CD8-positive, alpha-beta T cell (primary cell): ENCODE measurements at regions of chr17 and their contacts with region 1.

Region 1: GRCh38 chr17:40326014-40326831 is 17.2 kb downstream of the RARA start:
- DNase-seq: peak in 7 of 9 experiments; percentile 39 to 92 (median 71)
- ATAC-seq: peak; percentile 9
- H3K4me3 ChIP-seq: peak overlapping the region; percentile 36 to 51
- H3K4me3 Mint-ChIP-seq: peak overlapping the region; percentile 80
- H3K27ac ChIP-seq: peak overlapping the region; percentile 80 to 97
- H3K27ac Mint-ChIP-seq: peak overlapping the region; percentile 99
- H3K4me1 ChIP-seq: peaks cover 92% of the 10 kb centered on the region
- H3K4me1 Mint-ChIP-seq: peaks cover 90% of the 10 kb centered on the region
- H3K27me3 ChIP-seq: no peaks in the 10 kb centered on the region
- H3K27me3 Mint-ChIP-seq: no peaks in the 10 kb centered on the region
- CTCF ChIP-seq: no peak

Region 2: DNA sequence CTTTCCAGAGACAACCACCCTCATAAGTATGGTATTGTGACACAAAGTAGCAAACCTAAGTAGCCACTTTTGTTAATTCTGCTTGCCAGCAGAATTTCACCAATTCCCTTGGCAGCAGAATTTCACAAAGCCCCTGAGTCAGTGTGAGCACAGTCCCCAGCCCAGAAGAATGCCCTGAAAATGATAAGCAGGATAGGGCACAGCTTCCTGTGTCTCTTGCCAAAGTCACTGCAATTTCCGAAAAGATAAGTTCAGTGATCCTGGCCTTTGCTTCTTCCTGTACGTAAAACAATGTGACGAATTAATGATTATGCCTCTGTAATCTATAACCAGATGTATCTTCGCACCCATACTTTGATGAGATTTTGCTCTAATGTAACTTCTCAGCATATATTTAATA is 123.1 kb before region 1 on chr17:
- CTCF ChIA-PET with region 1: no interaction called
- POLR2A ChIA-PET with region 1: no interaction called
- intact Hi-C with region 1: no loop called
- DNase-seq: no peak
- ATAC-seq: no peak
- H3K4me3 ChIP-seq: no peak overlapping the region
- H3K4me3 Mint-ChIP-seq: no peak overlapping the region
- H3K27ac ChIP-seq: no peak overlapping the region
- H3K27ac Mint-ChIP-seq: no peak overlapping the region
- H3K4me1 ChIP-seq: no peaks in the 10 kb centered on the region
- H3K4me1 Mint-ChIP-seq: peaks cover 8% of the 10 kb centered on the region
- H3K27me3 ChIP-seq: peaks cover 0 to 4% of the 10 kb centered on the region in 2 experiments
- H3K27me3 Mint-ChIP-seq: peaks cover 6% of the 10 kb centered on the region
- CTCF ChIP-seq: no peak

Region 3: GRCh38 chr17:40340880-40341807 is 14.9 kb after region 1 on chr17:
- CTCF ChIA-PET with region 1: interaction called, 1,103 read pairs
- POLR2A ChIA-PET with region 1: interaction called, 20 read pairs
- intact Hi-C with region 1: loop called (anchors 1 kb)
- DNase-seq: peak; percentile 76 to 96 (median 88)
- ATAC-seq: peak; percentile 75
- H3K4me3 ChIP-seq: peak overlapping the region; percentile 64 to 74
- H3K4me3 Mint-ChIP-seq: peak overlapping the region; percentile 83
- H3K27ac ChIP-seq: peak overlapping the region; percentile 87 to 91
- H3K27ac Mint-ChIP-seq: peak overlapping the region; percentile 96
- H3K4me1 ChIP-seq: peaks cover 78% of the 10 kb centered on the region
- H3K4me1 Mint-ChIP-seq: peaks cover 75% of the 10 kb centered on the region
- H3K27me3 ChIP-seq: no peaks in the 10 kb centered on the region
- H3K27me3 Mint-ChIP-seq: no peaks in the 10 kb centered on the region
- CTCF ChIP-seq: peak; percentile 24